CD4-positive, alpha-beta T cell (primary cell): ENCODE measurements at regions of chr3 and their contacts with region 1.

Region 1: DNA sequence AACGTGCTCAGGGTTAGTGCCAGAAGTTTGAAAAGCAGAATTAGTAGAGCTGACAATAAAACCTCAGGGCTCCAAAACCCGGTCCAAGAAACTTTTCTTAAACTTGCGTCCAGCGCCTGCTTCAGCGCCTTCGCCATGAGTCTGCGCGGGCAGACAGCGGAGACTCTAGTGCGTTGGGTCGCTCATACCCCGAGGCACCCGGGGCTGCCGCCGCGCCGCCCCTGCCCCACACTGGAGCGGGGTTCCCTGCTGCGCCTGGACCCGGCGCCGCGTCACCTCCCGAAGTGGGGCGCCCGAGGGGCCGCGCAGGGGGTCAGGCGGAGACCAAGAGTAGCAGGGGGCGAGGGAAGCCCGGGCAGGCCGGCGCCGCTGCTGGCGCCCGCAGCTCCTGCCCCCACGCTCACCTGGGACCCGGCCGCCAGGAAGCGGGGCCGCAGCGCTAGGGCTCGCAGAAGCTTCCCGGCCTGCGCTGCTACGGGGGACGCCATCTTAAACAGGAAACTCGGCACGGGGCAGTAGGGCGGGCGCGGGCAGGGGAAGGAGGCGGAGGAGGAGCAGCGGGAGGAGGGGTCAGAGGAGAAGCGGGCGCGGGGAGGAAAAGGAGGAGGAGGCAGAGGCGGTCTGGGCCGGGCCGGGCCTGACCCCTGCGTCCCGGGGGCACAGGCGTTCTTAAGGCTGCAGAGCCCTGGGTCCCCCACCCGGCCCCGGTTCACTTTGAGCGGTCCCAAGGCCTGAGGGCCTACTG is at the start of gene SUCLG2:
- DNase-seq: peak; percentile 67 to 89 (median 78)
- ATAC-seq: peak; percentile 66
- H3K4me3 ChIP-seq: peak within 1 kb of the TSS; percentile 76
- H3K4me3 Mint-ChIP-seq: peak within 1 kb of the TSS; percentile 93
- H3K27ac ChIP-seq: peak within 1 kb of the TSS; percentile 56 to 77
- H3K27ac Mint-ChIP-seq: peak within 1 kb of the TSS; percentile 97
- H3K4me1 ChIP-seq: peaks cover 44% of the 10 kb centered on the region
- H3K4me1 Mint-ChIP-seq: peaks cover 85% of the 10 kb centered on the region
- H3K27me3 ChIP-seq: no peaks in the 10 kb centered on the region
- H3K27me3 Mint-ChIP-seq: no peaks in the 10 kb centered on the region
- CTCF ChIP-seq: no peak
- total RNA-seq, gene SUCLG2: 51.7 to 52.4 TPM

Region 2: DNA sequence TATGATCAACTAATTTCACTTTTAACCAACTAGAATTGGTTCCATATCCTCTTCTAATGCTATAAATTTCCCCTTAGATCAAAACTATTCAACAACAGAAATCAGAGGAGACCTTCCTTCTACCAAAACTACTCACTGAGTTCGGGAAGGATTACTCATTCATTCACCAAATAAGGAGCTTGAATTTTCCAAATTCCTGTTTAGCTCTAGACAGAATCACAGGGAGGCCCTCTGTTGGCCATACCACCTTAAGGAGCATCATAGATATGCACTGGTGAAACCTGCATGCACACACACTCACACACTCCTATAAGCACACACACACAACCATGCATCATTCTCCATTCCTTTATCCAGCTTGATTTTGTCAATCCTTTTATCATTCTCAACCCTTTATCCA is 48.9 kb before region 1 on chr3:
- CTCF ChIA-PET with region 1: no interaction called
- POLR2A ChIA-PET with region 1: interaction called, 6 read pairs
- intact Hi-C with region 1: loop called in 1 of 2 experiments (anchors 5 kb)
- DNase-seq: no peak
- ATAC-seq: no peak
- H3K4me3 ChIP-seq: no peak overlapping the region
- H3K4me3 Mint-ChIP-seq: no peak overlapping the region
- H3K27ac ChIP-seq: no peak overlapping the region
- H3K27ac Mint-ChIP-seq: peak overlapping the region; percentile 57
- H3K4me1 ChIP-seq: peaks cover 23% of the 10 kb centered on the region
- H3K4me1 Mint-ChIP-seq: peaks cover 68% of the 10 kb centered on the region
- H3K27me3 ChIP-seq: no peaks in the 10 kb centered on the region
- H3K27me3 Mint-ChIP-seq: no peaks in the 10 kb centered on the region
- CTCF ChIP-seq: no peak

Region 3: DNA sequence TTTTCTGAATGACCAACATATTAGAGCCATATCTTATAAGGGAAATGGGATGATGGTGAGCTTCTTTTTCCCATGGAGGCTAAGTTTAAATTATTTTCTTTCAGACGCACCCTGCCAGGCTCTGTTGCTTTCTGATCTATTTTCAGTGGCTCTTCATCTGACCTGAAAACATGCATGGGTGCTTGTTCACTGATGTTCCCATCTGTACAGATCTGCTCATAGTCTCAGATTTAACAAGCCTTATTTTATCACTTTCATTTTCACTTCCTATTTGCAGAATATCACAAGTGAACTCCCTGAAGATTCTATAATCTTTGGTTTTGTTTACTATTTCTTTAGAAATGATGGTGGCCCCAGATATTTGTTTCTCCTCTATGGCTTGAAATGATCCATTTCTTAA is 31.2 kb after region 1 on chr3:
- CTCF ChIA-PET with region 1: no interaction called
- POLR2A ChIA-PET with region 1: interaction called, 11 read pairs
- intact Hi-C with region 1: loop called in 1 of 2 experiments (anchors 5 kb)
- DNase-seq: peak in 3 of 14 experiments; percentile 14 to 45 (median 29)
- ATAC-seq: no peak
- H3K4me3 ChIP-seq: peak overlapping the region; percentile 19
- H3K4me3 Mint-ChIP-seq: peak overlapping the region; percentile 65
- H3K27ac ChIP-seq: peak overlapping the region in 1 of 2 donors; percentile 16
- H3K27ac Mint-ChIP-seq: peak overlapping the region; percentile 70
- H3K4me1 ChIP-seq: peaks cover 6% of the 10 kb centered on the region
- H3K4me1 Mint-ChIP-seq: peaks cover 39% of the 10 kb centered on the region
- H3K27me3 ChIP-seq: no peaks in the 10 kb centered on the region
- H3K27me3 Mint-ChIP-seq: no peaks in the 10 kb centered on the region
- CTCF ChIP-seq: no peak

Region 4: DNA sequence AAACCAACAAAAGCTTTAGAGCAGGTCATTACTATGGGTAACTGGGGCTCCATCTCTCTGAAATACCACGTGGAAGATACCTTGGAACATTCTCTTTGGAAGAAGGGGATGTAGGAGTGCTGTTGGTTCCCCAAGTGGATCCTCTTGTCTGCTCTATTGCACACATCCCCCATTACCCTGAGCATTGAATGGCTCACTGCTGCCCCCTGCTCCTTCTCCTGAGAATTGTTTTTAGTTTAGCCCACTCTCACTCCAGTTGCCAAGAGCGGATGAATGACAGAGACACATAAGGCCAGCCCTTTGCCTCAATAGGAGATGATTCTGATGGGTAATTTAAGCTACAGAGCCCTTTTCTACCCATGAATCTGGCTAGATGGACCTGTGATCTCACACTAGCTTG is 135.8 kb after region 1 on chr3:
- CTCF ChIA-PET with region 1: interaction called, 3 read pairs
- POLR2A ChIA-PET with region 1: interaction called, 17 read pairs
- intact Hi-C with region 1: loop called in 1 of 2 experiments (anchors 5 kb)
- DNase-seq: peak; percentile 31 to 79 (median 60)
- ATAC-seq: peak; percentile 73
- H3K4me3 ChIP-seq: no peak overlapping the region
- H3K4me3 Mint-ChIP-seq: no peak overlapping the region
- H3K27ac ChIP-seq: no peak overlapping the region
- H3K27ac Mint-ChIP-seq: no peak overlapping the region
- H3K4me1 ChIP-seq: peaks cover 5% of the 10 kb centered on the region
- H3K4me1 Mint-ChIP-seq: peaks cover 16% of the 10 kb centered on the region
- H3K27me3 ChIP-seq: no peaks in the 10 kb centered on the region
- H3K27me3 Mint-ChIP-seq: no peaks in the 10 kb centered on the region
- CTCF ChIP-seq: peak; percentile 84

Region 5: DNA sequence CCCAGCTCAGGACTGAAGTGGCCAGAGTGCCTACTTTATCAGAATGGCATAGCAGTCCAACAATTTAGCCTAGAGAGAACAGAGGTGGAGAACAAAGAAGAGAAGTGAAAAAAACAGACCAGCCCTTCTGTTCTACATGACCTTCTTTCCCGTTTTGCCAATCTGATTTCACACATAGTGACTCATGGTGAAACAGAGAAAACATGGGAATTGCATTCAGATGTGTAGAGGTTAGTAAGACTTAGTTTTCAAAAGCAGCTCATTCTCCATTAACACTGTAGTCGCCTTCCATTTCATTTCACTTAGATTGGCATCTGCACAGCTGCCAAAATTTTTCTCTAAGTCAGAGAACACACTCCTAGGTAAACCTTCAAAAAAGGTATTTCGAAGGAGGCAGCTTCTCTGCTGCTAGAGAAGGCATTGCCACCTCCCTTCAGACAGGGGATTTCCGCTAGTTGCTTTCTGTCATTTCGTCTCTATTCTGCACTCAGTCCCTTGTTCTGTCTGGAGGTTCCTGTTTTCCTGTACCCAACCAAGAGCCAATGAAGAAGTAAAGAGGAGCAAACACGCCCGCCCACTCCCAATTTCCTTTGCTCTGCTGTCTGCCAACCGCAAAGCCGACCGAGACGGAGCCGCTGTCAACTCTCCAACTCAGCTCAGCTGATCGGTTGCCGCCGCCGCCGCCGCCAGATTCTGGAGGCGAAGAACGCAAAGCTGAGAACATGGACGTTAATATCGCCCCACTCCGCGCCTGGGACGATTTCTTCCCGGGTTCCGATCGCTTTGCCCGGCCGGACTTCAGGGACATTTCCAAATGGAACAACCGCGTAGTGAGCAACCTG is 1430.3 kb after region 1 on chr3 and contains the start of gene ARL6IP5:
- CTCF ChIA-PET with region 1: no interaction called
- POLR2A ChIA-PET with region 1: no interaction called
- intact Hi-C with region 1: loop called in 1 of 2 experiments (anchors 10 kb)
- DNase-seq: peak; percentile 80 to 97 (median 88)
- ATAC-seq: peak; percentile 74
- H3K4me3 ChIP-seq: peak within 1 kb of the TSS; percentile 85
- H3K4me3 Mint-ChIP-seq: peak within 1 kb of the TSS; percentile 91
- H3K27ac ChIP-seq: peak within 1 kb of the TSS; percentile 91
- H3K27ac Mint-ChIP-seq: peak within 1 kb of the TSS; percentile 96
- H3K4me1 ChIP-seq: peaks cover 58% of the 10 kb centered on the region
- H3K4me1 Mint-ChIP-seq: peaks cover 73% of the 10 kb centered on the region
- H3K27me3 ChIP-seq: no peaks in the 10 kb centered on the region
- H3K27me3 Mint-ChIP-seq: no peaks in the 10 kb centered on the region
- CTCF ChIP-seq: no peak
- total RNA-seq, gene ARL6IP5: 58.0 to 65.2 TPM